Naive thymus-derived CD4-positive, alpha-beta T cell (primary cell): ENCODE measurements at regions of chr12 and their contacts with region 1.

Region 1: GRCh38 chr12:6062757-6063735 is 61.4 kb downstream of the VWF start:
- DNase-seq: peak; percentile 47 to 80 (median 65)
- ATAC-seq: peak; percentile 89
- H3K4me3 ChIP-seq: no peak overlapping the region
- H3K4me3 Mint-ChIP-seq: peak overlapping the region in 1 of 10 donors; percentile 12
- H3K27ac ChIP-seq: no peak overlapping the region
- H3K27ac Mint-ChIP-seq: no peak overlapping the region
- H3K4me1 ChIP-seq: no peaks in the 10 kb centered on the region
- H3K4me1 Mint-ChIP-seq: peaks cover 0 to 3% (median 0%) of the 10 kb centered on the region in 7 donors
- H3K27me3 ChIP-seq: no peaks in the 10 kb centered on the region
- H3K27me3 Mint-ChIP-seq: peaks cover 0 to 7% (median 4%) of the 10 kb centered on the region in 5 donors

Region 2: GRCh38 chr12:6074979-6075585 is 12.0 kb after region 1 on chr12:
- CTCF ChIA-PET with region 1: interaction called, 3 read pairs
- POLR2A ChIA-PET with region 1: no interaction called
- intact Hi-C with region 1: loop called in 1 of 2 experiments (anchors 1 kb)
- DNase-seq: peak in 6 of 9 donors; percentile 30 to 48 (median 40)
- ATAC-seq: peak; percentile 84
- H3K4me3 ChIP-seq: peak overlapping the region; percentile 32
- H3K4me3 Mint-ChIP-seq: peak overlapping the region; percentile 83 to 94 (median 89)
- H3K27ac ChIP-seq: no peak overlapping the region
- H3K27ac Mint-ChIP-seq: peak overlapping the region in 7 of 9 donors; percentile 32 to 94 (median 52)
- H3K4me1 ChIP-seq: peaks cover 9 to 18% of the 10 kb centered on the region in 2 donors
- H3K4me1 Mint-ChIP-seq: peaks cover 23 to 29% (median 27%) of the 10 kb centered on the region in 7 donors
- H3K27me3 ChIP-seq: no peaks in the 10 kb centered on the region
- H3K27me3 Mint-ChIP-seq: peaks cover 0 to 30% (median 5%) of the 10 kb centered on the region in 5 donors

Region 3: GRCh38 chr12:6140651-6141447 is 77.8 kb after region 1 on chr12:
- CTCF ChIA-PET with region 1: interaction called, 4 read pairs
- POLR2A ChIA-PET with region 1: interaction called, 3 read pairs
- intact Hi-C with region 1: loop called in 1 of 2 experiments (anchors 2 kb)
- DNase-seq: peak in 8 of 9 donors; percentile 28 to 72 (median 68)
- ATAC-seq: peak; percentile 78
- H3K4me3 ChIP-seq: peak overlapping the region; percentile 24
- H3K4me3 Mint-ChIP-seq: peak overlapping the region; percentile 61 to 88 (median 78)
- H3K27ac ChIP-seq: peak overlapping the region; percentile 62
- H3K27ac Mint-ChIP-seq: peak overlapping the region; percentile 91 to 99 (median 97)
- H3K4me1 ChIP-seq: peaks cover 3 to 51% of the 10 kb centered on the region in 2 donors
- H3K4me1 Mint-ChIP-seq: peaks cover 32 to 61% (median 56%) of the 10 kb centered on the region in 7 donors
- H3K27me3 ChIP-seq: no peaks in the 10 kb centered on the region
- H3K27me3 Mint-ChIP-seq: no peaks in the 10 kb centered on the region

Region 4: DNA sequence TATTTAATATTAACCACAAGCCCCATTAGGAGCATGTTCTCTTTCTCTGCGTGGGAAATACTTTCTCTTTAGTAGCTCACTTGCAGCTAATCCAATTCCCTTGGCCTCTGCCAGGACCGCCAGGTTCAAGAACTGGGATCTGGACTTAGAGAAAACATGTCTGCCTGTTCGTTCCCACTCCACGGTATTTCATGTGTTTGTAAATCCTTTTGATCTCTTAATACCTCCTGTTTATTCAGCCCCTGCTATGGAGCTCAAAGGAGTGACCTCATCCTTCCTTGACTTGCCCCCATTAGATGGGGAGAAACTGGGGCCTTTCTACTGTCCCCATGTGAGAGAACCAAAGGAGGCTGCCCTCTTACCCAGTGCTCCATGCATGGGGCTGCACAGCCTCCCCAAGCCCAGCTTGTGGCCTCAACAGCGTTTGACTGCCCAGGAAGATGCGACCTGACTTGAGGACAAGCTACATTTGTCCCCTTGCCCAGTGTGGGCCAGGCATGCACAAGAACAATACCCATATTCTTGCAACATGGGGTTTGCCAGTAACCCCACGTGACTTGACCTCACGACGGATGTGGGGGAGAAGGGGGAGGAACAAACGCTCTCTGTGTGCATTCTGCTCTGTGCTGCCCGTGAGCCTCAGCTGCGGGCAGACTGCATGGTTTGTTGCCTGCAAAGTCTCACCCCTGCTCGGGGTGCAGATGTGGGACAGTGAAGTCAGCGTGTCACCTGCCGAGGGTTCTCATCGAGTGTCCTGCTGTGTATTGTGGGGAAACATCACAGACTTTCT is 167.5 kb after region 1 on chr12:
- CTCF ChIA-PET with region 1: interaction called, 5 read pairs
- POLR2A ChIA-PET with region 1: no interaction called
- intact Hi-C with region 1: loop called in 1 of 2 experiments (anchors 1 kb)
- DNase-seq: peak; percentile 33 to 77 (median 70)
- ATAC-seq: peak; percentile 95
- H3K4me3 ChIP-seq: no peak overlapping the region
- H3K4me3 Mint-ChIP-seq: peak overlapping the region; percentile 53 to 82 (median 72)
- H3K27ac ChIP-seq: peak overlapping the region; percentile 53
- H3K27ac Mint-ChIP-seq: peak overlapping the region; percentile 70 to 98 (median 94)
- H3K4me1 ChIP-seq: peaks cover 21 to 27% of the 10 kb centered on the region in 2 donors
- H3K4me1 Mint-ChIP-seq: peaks cover 22 to 43% (median 33%) of the 10 kb centered on the region in 7 donors
- H3K27me3 ChIP-seq: no peaks in the 10 kb centered on the region
- H3K27me3 Mint-ChIP-seq: peaks cover 0 to 2% (median 0%) of the 10 kb centered on the region in 5 donors

Region 5: GRCh38 chr12:6278439-6279255 is 215.6 kb after region 1 on chr12:
- CTCF ChIA-PET with region 1: interaction called, 23 read pairs
- POLR2A ChIA-PET with region 1: interaction called, 4 read pairs
- intact Hi-C with region 1: loop called (anchors 1 kb)
- DNase-seq: peak; percentile 66 to 96 (median 83)
- ATAC-seq: peak; percentile 99
- H3K4me3 ChIP-seq: peak overlapping the region; percentile 23
- H3K4me3 Mint-ChIP-seq: peak overlapping the region; percentile 17 to 82 (median 71)
- H3K27ac ChIP-seq: no peak overlapping the region
- H3K27ac Mint-ChIP-seq: peak overlapping the region in 2 of 9 donors; percentile 22 to 72
- H3K4me1 ChIP-seq: peaks cover 0 to 3% of the 10 kb centered on the region in 2 donors
- H3K4me1 Mint-ChIP-seq: peaks cover 0 to 11% (median 6%) of the 10 kb centered on the region in 7 donors
- H3K27me3 ChIP-seq: peaks cover 0 to 3% of the 10 kb centered on the region in 2 donors
- H3K27me3 Mint-ChIP-seq: peaks cover 5 to 33% (median 19%) of the 10 kb centered on the region in 5 donors

Region 6: DNA sequence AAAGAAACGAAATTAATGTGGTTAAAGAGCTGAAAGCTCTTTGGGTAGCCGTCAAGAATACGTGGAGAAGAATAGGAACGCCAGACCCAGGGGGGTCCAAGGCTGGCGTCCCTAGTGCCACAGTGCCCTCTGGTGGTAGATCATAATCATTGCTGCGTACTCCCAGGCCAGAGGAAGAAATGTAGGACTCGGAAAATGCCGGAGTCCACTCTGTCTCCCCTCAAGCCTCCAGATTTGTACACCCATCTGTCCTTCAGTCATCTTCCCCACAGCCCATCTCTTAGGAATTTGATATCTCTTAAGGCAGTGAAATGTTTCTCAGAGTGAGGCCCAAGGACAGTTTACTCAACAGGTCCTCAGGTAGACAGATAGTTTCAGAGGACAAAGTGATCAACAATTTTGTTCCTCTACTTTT is 222.0 kb after region 1 on chr12:
- CTCF ChIA-PET with region 1: interaction called, 23 read pairs
- POLR2A ChIA-PET with region 1: no interaction called
- intact Hi-C with region 1: loop called (anchors 1 kb)
- DNase-seq: peak; percentile 33 to 70 (median 56)
- ATAC-seq: peak; percentile 90
- H3K4me3 ChIP-seq: no peak overlapping the region
- H3K4me3 Mint-ChIP-seq: no peak overlapping the region
- H3K27ac ChIP-seq: no peak overlapping the region
- H3K27ac Mint-ChIP-seq: peak overlapping the region in 1 of 9 donors; percentile 20
- H3K4me1 ChIP-seq: no peaks in the 10 kb centered on the region
- H3K4me1 Mint-ChIP-seq: peaks cover 0 to 6% (median 4%) of the 10 kb centered on the region in 7 donors
- H3K27me3 ChIP-seq: peaks cover 0 to 2% of the 10 kb centered on the region in 2 donors
- H3K27me3 Mint-ChIP-seq: peaks cover 0 to 19% (median 13%) of the 10 kb centered on the region in 5 donors